ENCODE measurements at regions of chr2 and their contacts with region 1.

Region 1: DNA sequence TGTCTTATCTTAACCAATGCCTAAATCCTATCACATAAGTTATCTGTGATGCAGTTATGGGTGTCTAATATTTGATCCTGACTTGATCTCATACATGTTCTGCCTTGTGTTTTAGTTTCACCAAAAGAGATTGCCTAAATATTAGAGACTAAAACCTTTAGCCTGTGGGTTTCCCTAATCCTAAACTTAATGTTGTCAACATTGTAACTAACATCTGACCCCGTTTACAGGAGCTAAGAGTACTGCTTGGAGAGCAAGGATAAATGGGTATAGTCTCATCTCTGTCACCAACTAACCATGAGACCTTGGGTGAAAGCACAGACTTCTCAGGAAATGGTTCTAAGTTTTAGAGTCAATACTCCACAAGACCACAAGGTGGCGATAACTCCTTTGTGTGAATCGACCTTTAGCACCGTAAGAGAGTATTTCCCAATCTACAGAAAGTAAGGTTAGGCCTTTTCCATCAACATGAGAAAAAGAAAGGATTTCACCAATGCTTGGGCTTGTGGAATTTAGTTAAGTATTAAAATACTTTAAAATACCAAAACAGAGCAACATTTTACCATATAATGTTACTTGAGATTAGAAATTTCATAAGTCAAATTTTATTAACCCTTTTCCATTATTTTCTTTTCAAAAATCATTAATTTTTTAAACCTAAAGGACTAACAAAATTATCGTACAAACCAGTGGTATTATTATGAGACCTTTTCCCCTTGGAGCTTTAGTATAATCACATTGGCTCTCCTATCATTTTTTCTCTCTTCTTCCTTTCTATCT is 60.5 kb downstream of the G6PC2 start:
- DNase-seq: no peak
- H3K4me3 ChIP-seq: no peak overlapping the region
- H3K27ac ChIP-seq: no peak overlapping the region
- H3K4me1 ChIP-seq: peaks cover 0 to 12% (median 3%) of the 10 kb centered on the region in 3 donors
- H3K27me3 ChIP-seq: no peaks in the 10 kb centered on the region
- CTCF ChIP-seq: peak; percentile 71 to 91 (median 84)
- POLR2A ChIP-seq: no peak

Region 2: DNA sequence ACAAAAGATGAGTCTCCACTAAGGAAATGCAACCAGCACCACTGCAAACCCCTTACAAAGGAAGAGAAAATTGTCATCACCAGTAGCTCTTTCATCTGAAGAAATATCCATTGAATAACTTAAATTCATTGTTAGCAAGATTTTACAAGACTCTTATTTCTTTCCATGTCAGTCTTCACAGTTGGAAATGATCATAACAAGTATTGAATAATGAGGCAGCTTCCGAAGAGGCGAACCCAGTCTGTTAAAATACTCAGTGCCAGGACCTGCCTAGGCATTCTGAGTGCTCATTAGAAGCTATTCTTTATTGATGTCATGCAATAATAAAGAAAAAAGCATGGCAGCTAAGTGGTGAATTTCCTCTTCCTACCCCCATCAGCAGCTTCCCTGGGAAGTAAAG is 125.7 kb before region 1 on chr2:
- intact Hi-C with region 1: no loop called
- DNase-seq: no peak
- H3K4me3 ChIP-seq: no peak overlapping the region
- H3K27ac ChIP-seq: no peak overlapping the region
- H3K4me1 ChIP-seq: no peaks in the 10 kb centered on the region
- H3K27me3 ChIP-seq: no peaks in the 10 kb centered on the region
- CTCF ChIP-seq: no peak
- POLR2A ChIP-seq: no peak

Region 3: GRCh38 chr2:169141713-169142352 is 180.2 kb after region 1 on chr2:
- intact Hi-C with region 1: loop called (anchors 5 kb)
- DNase-seq: no peak
- H3K4me3 ChIP-seq: no peak overlapping the region
- H3K27ac ChIP-seq: no peak overlapping the region
- H3K4me1 ChIP-seq: no peaks in the 10 kb centered on the region
- H3K27me3 ChIP-seq: no peaks in the 10 kb centered on the region
- CTCF ChIP-seq: peak; percentile 31 to 84 (median 72)
- POLR2A ChIP-seq: no peak